ENCODE measurements at regions of chr5 and their contacts with region 1.

Region 1: DNA sequence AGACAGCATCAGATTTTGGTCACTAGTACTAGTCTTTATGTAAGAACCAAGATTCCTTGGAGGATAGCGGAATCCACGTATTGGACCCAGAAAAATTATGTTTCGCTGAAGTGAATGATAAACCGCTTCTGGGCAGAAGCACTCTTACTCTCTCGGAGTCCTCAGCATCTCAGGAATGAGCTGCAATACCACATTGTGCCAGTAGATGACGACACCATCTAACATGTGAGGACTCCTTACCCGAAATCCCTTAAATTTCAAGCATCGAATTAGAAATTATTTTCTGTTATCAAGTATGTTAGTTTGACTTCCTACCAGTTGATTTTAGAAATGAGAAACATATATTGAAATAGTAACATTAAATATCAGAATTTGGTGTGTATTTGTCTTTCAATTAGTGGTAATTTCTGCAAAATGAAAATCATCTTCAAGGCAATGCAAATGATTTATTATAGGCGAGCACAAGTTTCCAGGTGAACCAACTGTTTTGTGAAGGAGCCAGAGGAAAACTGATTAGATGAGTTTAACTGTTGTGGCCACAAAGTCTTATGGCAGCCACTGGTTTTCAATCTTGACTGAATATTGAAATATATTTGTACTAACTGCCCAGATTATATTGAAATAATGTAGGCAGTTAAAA is 66.0 kb upstream of the CAMK4 start:
- DNase-seq: peak; percentile 83
- H3K4me3 Mint-ChIP-seq: no peak overlapping the region
- H3K27ac Mint-ChIP-seq: no peak overlapping the region
- H3K4me1 Mint-ChIP-seq: peaks cover 7% of the 10 kb centered on the region
- H3K27me3 Mint-ChIP-seq: no peaks in the 10 kb centered on the region
- CTCF ChIP-seq: peak; percentile 98

Region 2: DNA sequence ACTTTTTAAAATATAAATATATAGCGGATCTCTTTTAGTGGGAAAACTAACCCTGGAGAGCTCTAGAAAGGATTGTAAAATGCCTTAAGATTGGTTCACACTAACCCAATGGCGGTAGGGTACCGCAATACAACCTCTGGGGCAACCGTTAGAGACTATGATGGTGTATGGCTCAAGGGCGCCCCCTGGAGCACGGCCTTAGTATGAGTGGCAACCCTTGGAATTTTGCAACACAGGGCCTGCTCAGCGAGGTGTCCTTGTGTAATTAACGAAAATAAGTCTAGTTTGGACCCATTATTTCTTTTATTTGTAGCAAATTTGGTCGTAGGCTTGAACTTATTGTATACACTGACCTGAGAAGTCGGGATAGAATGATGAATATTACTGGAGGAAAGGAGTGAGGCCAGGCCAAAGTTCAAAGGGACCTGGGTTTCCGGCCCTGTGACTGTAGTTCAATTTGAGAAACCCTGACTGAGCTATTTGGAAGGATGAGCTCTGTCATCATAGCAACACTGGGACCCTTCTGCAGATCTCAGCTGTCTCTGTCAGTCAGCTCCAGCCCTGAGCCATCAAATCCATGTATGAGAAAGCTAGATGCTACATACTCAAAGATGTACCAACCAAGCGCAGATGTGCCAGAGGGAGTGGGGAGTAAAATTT is 120.8 kb after region 1 on chr5:
- CTCF ChIA-PET with region 1: interaction called, 16 read pairs
- intact Hi-C with region 1: loop called (anchors 1 kb)
- DNase-seq: peak; percentile 90
- H3K4me3 Mint-ChIP-seq: no peak overlapping the region
- H3K27ac Mint-ChIP-seq: no peak overlapping the region
- H3K4me1 Mint-ChIP-seq: no peaks in the 10 kb centered on the region
- H3K27me3 Mint-ChIP-seq: no peaks in the 10 kb centered on the region
- CTCF ChIP-seq: peak; percentile 96

Region 3: DNA sequence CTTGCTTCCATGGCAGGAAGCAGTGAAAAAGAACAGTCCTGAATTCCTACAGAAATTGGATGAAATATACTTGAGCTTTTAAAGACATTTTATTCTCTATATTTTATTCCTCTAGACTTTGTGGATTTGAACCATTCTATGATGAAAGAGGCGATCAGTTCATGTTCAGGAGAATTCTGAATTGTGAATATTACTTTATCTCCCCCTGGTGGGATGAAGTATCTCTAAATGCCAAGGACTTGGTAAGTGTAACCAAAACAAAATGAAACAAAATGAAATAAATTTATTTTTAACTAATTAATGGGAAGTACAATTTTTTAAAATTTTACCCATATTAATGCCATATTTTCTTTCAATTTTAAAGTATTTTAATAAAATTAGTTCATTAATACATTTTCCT is 320.0 kb after region 1 on chr5:
- CTCF ChIA-PET with region 1: no interaction called
- intact Hi-C with region 1: loop called (anchors 5 kb)
- DNase-seq: no peak
- H3K4me3 Mint-ChIP-seq: no peak overlapping the region
- H3K27ac Mint-ChIP-seq: no peak overlapping the region
- H3K4me1 Mint-ChIP-seq: no peaks in the 10 kb centered on the region
- H3K27me3 Mint-ChIP-seq: no peaks in the 10 kb centered on the region
- CTCF ChIP-seq: no peak

Measured in Calu3 (cell line).